Transverse colon (tissue), 4 donors: ENCODE measurements at regions of chr5 and their contacts with region 1.

Region 1: GRCh38 chr5:87924451-87925126 is 344.1 kb downstream of the TMEM161B start:
- DNase-seq: no peak
- H3K4me3 ChIP-seq: no peak overlapping the region
- H3K27ac ChIP-seq: no peak overlapping the region
- H3K4me1 ChIP-seq: no peaks in the 10 kb centered on the region
- H3K27me3 ChIP-seq: no peaks in the 10 kb centered on the region
- CTCF ChIP-seq: no peak
- EP300 ChIP-seq: no peak
- POLR2A ChIP-seq: no peak

Region 2: DNA sequence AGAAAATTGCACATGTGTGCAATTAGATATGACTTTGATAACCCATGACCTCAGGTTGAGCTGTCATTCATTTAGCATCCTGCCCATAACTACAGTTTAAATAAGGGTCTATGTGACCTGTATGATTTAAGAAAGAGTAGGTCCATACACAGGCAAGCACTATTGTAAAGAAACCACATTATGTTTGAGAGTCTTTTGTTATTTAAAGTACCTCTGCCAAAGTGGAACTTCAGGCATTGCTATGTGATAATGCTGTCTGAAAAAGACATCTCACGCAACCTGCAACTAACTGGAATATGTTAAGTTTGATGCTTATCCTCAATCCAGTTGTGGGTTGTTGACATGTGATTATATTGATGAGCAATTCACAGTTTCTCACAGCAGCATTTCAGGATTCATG is 27.1 kb after region 1 on chr5:
- in situ Hi-C with region 1: no loop called
- intact Hi-C with region 1: loop called (anchors 1 kb)
- DNase-seq: no peak
- H3K4me3 ChIP-seq: no peak overlapping the region
- H3K27ac ChIP-seq: no peak overlapping the region
- H3K4me1 ChIP-seq: no peaks in the 10 kb centered on the region
- H3K27me3 ChIP-seq: no peaks in the 10 kb centered on the region
- CTCF ChIP-seq: no peak
- EP300 ChIP-seq: no peak
- POLR2A ChIP-seq: no peak

Region 3: DNA sequence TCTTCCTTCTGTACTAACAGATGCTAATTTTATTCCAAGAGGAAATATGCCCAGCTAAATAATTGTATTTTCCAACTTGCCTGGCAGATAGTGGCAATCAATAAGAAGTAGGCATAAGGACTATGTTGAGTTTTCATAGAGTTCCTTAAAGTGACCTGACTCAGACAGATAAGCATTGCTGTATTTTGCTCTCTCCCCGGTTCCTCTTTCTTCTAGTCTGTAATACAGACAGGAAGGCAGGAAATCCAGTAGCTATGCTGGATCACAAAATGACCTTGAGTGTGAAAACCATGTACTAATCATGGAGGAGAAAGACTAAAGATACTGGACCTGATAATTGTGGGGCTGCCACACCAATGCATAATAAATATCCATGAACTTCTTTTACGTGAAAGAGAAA is 1783.3 kb after region 1 on chr5:
- in situ Hi-C with region 1: no loop called
- intact Hi-C with region 1: no loop called
- DNase-seq: no peak
- H3K4me3 ChIP-seq: no peak overlapping the region
- H3K27ac ChIP-seq: no peak overlapping the region
- H3K4me1 ChIP-seq: no peaks in the 10 kb centered on the region
- H3K27me3 ChIP-seq: no peaks in the 10 kb centered on the region
- CTCF ChIP-seq: no peak
- EP300 ChIP-seq: no peak
- POLR2A ChIP-seq: no peak